Activated naive CD4-positive, alpha-beta T cell treated with anti-CD3 and anti-CD28 coated beads for 36 hours (primary cell): ENCODE measurements at regions of chr6 and their contacts with region 1.

Region 1: DNA sequence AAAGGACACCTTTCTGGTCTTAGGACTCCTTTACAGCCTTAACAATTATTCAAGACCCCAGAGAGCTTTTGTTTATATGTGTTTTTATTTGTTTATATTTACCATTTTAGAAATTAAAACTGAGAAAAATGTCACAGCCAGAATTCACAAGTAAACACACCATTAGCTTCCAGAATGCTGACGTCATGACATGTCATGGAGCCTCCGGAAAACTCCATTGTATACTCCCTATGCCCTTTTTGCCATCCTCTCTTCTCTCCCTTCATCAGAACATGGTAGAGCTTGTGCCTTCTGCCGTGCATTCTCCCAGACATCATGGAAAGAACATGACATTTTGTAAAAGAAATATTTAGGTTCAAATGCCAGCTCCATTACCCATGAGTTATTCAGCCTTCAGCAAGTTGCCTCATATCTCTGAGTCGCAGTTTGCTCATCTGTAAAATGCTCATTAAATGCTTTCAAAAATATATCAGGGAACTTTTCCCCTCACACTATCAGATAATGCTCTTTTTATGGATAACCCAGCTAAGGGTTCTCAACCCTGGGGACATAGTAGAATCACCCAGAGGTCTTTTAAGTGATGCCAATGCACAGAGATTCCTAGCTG is 27.8 kb downstream of the TNFAIP3 start:
- DNase-seq: no peak
- H3K4me3 Mint-ChIP-seq: no peak overlapping the region
- H3K27ac Mint-ChIP-seq: no peak overlapping the region
- H3K4me1 Mint-ChIP-seq: peaks cover 45% of the 10 kb centered on the region
- H3K27me3 Mint-ChIP-seq: no peaks in the 10 kb centered on the region

Region 2: DNA sequence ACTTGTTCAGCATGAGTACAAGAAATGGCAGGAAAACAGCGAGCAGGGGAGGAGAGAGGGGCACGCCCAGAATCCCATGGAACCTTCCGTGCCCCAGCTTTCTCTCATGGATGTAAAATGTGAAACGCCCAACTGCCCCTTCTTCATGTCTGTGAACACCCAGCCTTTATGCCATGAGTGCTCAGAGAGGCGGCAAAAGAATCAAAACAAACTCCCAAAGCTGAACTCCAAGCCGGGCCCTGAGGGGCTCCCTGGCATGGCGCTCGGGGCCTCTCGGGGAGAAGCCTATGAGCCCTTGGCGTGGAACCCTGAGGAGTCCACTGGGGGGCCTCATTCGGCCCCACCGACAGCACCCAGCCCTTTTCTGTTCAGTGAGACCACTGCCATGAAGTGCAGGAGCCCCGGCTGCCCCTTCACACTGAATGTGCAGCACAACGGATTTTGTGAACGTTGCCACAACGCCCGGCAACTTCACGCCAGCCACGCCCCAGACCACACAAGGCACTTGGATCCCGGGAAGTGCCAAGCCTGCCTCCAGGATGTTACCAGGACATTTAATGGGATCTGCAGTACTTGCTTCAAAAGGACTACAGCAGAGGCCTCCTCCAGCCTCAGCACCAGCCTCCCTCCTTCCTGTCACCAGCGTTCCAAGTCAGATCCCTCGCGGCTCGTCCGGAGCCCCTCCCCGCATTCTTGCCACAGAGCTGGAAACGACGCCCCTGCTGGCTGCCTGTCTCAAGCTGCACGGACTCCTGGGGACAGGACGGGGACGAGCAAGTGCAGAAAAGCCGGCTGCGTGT is 16.2 kb before region 1 on chr6:
- CTCF ChIA-PET with region 1: interaction called, 4 read pairs
- intact Hi-C with region 1: loop called (anchors 1 kb)
- DNase-seq: no peak
- H3K4me3 Mint-ChIP-seq: peak overlapping the region; percentile 65
- H3K27ac Mint-ChIP-seq: peak overlapping the region; percentile 99
- H3K4me1 Mint-ChIP-seq: peaks cover 82% of the 10 kb centered on the region
- H3K27me3 Mint-ChIP-seq: no peaks in the 10 kb centered on the region